Activated B cell treated with CpG ODN at 0.5 μM for 24 hours (primary cell): ENCODE measurements at regions of chr11 and their contacts with region 1.

Region 1: DNA sequence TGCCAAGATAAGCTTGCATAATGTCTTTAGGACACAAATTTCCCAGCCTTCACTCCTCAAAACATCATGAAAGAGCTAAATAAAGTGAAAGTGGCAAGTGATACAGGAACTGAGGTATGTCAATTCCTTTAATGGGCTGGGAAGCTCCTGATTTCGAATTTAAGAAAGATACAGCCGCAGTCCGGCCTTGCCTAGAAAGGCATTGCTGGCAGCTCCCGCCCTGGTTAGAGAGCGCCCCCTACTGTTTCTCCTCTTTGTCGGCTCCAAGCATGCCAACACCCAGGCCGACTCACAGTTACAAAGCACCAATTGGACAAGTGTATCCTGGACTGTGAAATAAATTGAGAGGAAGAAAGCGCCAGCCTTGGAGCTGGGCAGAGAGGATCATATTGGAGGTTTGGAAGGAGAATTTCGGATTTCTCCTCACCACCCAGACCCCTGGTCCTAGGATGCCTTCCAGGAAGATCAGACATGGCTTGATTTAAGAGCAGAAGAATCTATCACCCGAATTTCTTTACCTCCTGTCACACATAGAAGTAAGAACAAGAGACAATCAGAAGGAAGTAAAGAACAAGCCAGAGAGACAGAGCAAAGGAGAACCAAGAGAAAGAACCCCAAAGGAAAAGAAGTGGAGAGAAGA is 84.0 kb downstream of the FAM76B start:
- DNase-seq: peak; percentile 61
- ATAC-seq: peak; percentile 93
- H3K4me3 Mint-ChIP-seq: no peak overlapping the region
- H3K27ac Mint-ChIP-seq: no peak overlapping the region
- H3K4me1 Mint-ChIP-seq: peaks cover 26% of the 10 kb centered on the region
- H3K27me3 Mint-ChIP-seq: no peaks in the 10 kb centered on the region
- CTCF ChIP-seq: peak; percentile 93

Region 2: DNA sequence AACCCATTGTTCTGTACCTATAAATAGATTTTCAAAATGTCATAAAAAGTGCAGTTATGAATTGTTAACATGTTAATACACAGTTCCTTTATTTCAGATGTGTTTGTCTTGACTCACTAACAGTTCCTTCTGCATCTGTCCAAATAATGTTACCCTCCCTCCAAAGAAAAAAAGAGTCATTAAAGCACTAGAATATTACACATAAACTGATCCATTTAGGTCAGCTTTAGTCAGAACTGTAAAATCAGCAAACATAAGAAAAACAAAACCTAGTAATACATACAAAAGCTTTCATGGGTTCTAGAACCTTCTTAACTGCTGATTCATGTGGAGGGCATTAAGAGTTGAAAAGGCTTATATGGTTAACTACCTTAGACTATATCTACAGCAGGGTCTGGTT is 540.0 kb before region 1 on chr11:
- CTCF ChIA-PET with region 1: interaction called, 305 read pairs
- POLR2A ChIA-PET with region 1: interaction called, 5 read pairs
- intact Hi-C with region 1: no loop called
- DNase-seq: no peak
- ATAC-seq: no peak
- H3K4me3 Mint-ChIP-seq: no peak overlapping the region
- H3K27ac Mint-ChIP-seq: no peak overlapping the region
- H3K4me1 Mint-ChIP-seq: peaks cover 34% of the 10 kb centered on the region
- H3K27me3 Mint-ChIP-seq: no peaks in the 10 kb centered on the region
- CTCF ChIP-seq: no peak

Region 3: GRCh38 chr11:95254131-95254704 is 451.4 kb before region 1 on chr11:
- CTCF ChIA-PET with region 1: interaction called, 18 read pairs
- POLR2A ChIA-PET with region 1: interaction called, 4 read pairs
- intact Hi-C with region 1: no loop called
- DNase-seq: peak; percentile 54
- ATAC-seq: peak; percentile 94
- H3K4me3 Mint-ChIP-seq: peak overlapping the region; percentile 75
- H3K27ac Mint-ChIP-seq: peak overlapping the region; percentile 91
- H3K4me1 Mint-ChIP-seq: peaks cover 81% of the 10 kb centered on the region
- H3K27me3 Mint-ChIP-seq: no peaks in the 10 kb centered on the region
- CTCF ChIP-seq: no peak

Region 4: GRCh38 chr11:95404330-95404729 is 301.3 kb before region 1 on chr11:
- CTCF ChIA-PET with region 1: interaction called, 4 read pairs
- POLR2A ChIA-PET with region 1: no interaction called
- intact Hi-C with region 1: loop called (anchors 5 kb)
- DNase-seq: no peak
- ATAC-seq: peak; percentile 69
- H3K4me3 Mint-ChIP-seq: no peak overlapping the region
- H3K27ac Mint-ChIP-seq: no peak overlapping the region
- H3K4me1 Mint-ChIP-seq: peaks cover 11% of the 10 kb centered on the region
- H3K27me3 Mint-ChIP-seq: no peaks in the 10 kb centered on the region
- CTCF ChIP-seq: no peak

Region 5: GRCh38 chr11:95688580-95689189 is 16.9 kb before region 1 on chr11:
- CTCF ChIA-PET with region 1: interaction called, 33 read pairs
- POLR2A ChIA-PET with region 1: interaction called, 13 read pairs
- intact Hi-C with region 1: loop called (anchors 1 kb)
- DNase-seq: no peak
- ATAC-seq: no peak
- H3K4me3 Mint-ChIP-seq: no peak overlapping the region
- H3K27ac Mint-ChIP-seq: no peak overlapping the region
- H3K4me1 Mint-ChIP-seq: peaks cover under 1% of the 10 kb centered on the region
- H3K27me3 Mint-ChIP-seq: no peaks in the 10 kb centered on the region
- CTCF ChIP-seq: no peak

Region 6: GRCh38 chr11:95725196-95725595 is 19.6 kb after region 1 on chr11:
- CTCF ChIA-PET with region 1: interaction called, 10 read pairs
- POLR2A ChIA-PET with region 1: interaction called, 5 read pairs
- intact Hi-C with region 1: no loop called
- DNase-seq: no peak
- ATAC-seq: no peak
- H3K4me3 Mint-ChIP-seq: no peak overlapping the region
- H3K27ac Mint-ChIP-seq: no peak overlapping the region
- H3K4me1 Mint-ChIP-seq: peaks cover 15% of the 10 kb centered on the region
- H3K27me3 Mint-ChIP-seq: no peaks in the 10 kb centered on the region
- CTCF ChIP-seq: no peak

Region 7: DNA sequence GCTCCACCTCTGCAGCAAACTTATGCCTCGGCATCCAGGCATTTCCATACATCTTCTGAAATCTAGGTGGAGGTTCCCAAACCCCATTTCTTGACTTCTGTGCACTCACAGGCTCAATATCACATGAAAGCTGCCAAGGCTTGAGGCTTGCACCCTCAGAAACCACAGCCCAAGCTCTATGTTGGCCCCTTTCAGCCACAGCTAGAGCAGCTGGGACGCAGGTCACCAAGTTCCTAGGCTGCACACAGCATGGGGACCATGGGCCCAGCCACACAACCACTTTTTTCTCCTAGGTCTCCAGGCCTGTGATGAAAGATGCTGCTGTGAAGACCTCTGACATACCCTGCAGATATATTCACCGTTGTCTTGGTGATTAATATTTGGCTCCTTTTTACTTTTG is 243.0 kb after region 1 on chr11:
- CTCF ChIA-PET with region 1: no interaction called
- POLR2A ChIA-PET with region 1: no interaction called
- intact Hi-C with region 1: no loop called
- DNase-seq: no peak
- ATAC-seq: no peak
- H3K4me3 Mint-ChIP-seq: no peak overlapping the region
- H3K27ac Mint-ChIP-seq: no peak overlapping the region
- H3K4me1 Mint-ChIP-seq: no peaks in the 10 kb centered on the region
- H3K27me3 Mint-ChIP-seq: peaks cover 3% of the 10 kb centered on the region
- CTCF ChIP-seq: no peak